ENCODE measurements at regions of chr6 and their contacts with region 1.

Region 1: GRCh38 chr6:46090115-46091079 is 39.4 kb upstream of the ENPP4 start:
- DNase-seq: peak; percentile 63
- H3K4me3 ChIP-seq: no peak overlapping the region
- H3K27ac ChIP-seq: no peak overlapping the region
- H3K4me1 ChIP-seq: no peaks in the 10 kb centered on the region
- CTCF ChIP-seq: peak; percentile 92

Region 2: GRCh38 chr6:45791211-45792168 is 298.9 kb before region 1 on chr6:
- CTCF ChIA-PET with region 1: no interaction called
- POLR2A ChIA-PET with region 1: no interaction called
- intact Hi-C with region 1: no loop called
- DNase-seq: no peak
- H3K4me3 ChIP-seq: no peak overlapping the region
- H3K27ac ChIP-seq: no peak overlapping the region
- H3K4me1 ChIP-seq: no peaks in the 10 kb centered on the region
- CTCF ChIP-seq: no peak

Region 3: DNA sequence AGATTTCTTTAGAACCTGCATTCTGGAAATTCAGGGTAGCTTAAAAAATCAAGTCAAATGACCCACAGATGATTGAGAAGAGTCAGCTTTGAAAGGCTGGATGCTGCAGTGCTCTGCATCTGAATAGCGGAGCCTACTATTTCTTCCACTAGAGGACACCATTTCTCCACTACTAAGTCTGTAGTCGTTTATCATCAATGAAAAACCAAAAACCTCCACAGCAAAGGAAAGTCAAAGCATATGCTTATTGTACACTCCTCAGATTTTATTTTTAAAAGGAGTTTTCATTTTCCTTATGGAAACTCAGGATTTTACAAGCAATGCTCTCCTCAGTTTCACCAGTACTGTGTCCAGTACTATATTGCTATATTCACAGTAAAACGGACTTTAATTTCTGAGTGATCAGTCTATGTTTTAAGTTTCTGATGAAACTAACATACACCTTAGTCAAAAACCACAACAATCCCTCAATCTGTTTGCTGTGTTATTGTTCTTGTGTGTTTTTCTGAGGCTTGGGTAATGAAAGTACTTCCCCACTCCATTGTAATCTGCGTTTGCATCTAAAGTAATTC is 130.9 kb after region 1 on chr6:
- CTCF ChIA-PET with region 1: interaction called, 3 read pairs
- POLR2A ChIA-PET with region 1: interaction called, 4 read pairs
- intact Hi-C with region 1: loop called (anchors 1 kb)
- DNase-seq: peak; percentile 79
- H3K4me3 ChIP-seq: no peak overlapping the region
- H3K27ac ChIP-seq: peak overlapping the region; percentile 36
- H3K4me1 ChIP-seq: peaks cover 17% of the 10 kb centered on the region
- CTCF ChIP-seq: peak; percentile 99

Region 4: GRCh38 chr6:46410334-46410953 is 320.0 kb after region 1 on chr6:
- CTCF ChIA-PET with region 1: no interaction called
- POLR2A ChIA-PET with region 1: no interaction called
- intact Hi-C with region 1: loop called (anchors 1 kb)
- DNase-seq: peak; percentile 63
- H3K4me3 ChIP-seq: no peak overlapping the region
- H3K27ac ChIP-seq: no peak overlapping the region
- H3K4me1 ChIP-seq: no peaks in the 10 kb centered on the region
- CTCF ChIP-seq: peak; percentile 90

Region 5: DNA sequence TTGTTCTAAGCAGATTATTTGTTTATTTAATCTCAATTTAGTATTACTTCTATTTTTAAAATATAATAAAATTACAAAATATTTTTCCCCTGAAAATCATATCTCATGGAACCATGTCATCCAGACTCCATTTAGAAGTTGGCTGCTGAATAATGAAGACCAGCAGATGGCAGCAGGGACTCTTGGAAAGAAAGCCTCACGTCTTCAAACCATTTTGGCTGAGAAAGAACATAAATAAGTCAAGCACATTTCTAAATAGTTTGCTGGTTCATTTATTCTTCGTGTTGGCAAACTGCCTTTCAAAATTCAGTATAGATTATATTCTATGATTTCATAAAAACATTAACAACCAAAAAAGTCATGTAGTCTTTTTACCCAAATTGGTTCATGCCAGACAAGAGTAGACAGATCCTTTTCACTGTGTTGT is 329.2 kb after region 1 on chr6:
- CTCF ChIA-PET with region 1: no interaction called
- POLR2A ChIA-PET with region 1: no interaction called
- intact Hi-C with region 1: loop called (anchors 2 kb)
- DNase-seq: peak; percentile 77
- H3K4me3 ChIP-seq: no peak overlapping the region
- H3K27ac ChIP-seq: no peak overlapping the region
- H3K4me1 ChIP-seq: no peaks in the 10 kb centered on the region
- CTCF ChIP-seq: peak; percentile 92

Region 6: DNA sequence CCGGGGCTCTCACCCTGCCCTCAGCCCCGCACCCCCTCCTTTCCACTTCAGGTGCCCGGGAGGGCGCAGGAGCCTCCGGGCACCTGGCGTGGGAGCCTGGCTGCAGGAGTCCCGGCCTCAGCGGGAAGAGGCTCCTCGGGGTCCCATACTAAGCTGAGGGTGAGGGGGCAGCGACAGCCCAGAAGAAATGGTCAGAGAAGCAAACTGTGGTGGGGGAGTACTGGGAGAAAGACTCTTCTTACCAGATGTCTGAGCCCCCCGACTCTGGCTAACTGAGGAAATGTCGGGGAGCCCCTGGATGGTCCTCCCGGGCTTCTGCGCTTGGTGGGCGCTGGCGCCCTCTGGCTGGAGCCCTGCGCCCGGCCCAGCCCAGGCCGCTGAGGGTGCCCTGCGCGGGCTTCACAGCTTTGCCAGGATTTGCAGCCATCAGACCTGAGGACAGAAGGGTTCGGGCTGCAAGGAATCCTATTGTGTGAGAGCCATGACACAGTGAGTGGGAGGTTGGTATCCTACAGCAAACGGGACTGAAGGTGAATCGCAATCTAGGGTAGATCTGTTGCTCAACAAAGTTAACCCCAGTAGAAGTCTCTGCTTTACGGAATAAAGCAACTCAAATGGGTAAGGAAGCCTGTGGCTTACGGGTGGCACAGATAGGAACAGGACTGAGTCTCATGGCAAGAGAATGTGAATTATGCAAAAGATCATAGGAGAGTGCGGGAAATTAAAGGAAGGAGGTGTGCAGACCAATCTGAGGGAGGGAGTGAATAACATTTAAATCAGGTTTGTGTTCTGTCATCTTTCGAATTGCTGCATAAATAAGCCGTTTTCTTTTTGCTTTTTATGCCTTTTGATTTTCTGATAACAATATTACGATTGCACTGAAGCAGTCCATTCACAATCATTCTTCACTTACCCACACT is 401.5 kb after region 1 on chr6:
- CTCF ChIA-PET with region 1: no interaction called
- POLR2A ChIA-PET with region 1: no interaction called
- intact Hi-C with region 1: loop called (anchors 10 kb)
- DNase-seq: peak; percentile 39
- H3K4me3 ChIP-seq: peak overlapping the region; percentile 72
- H3K27ac ChIP-seq: no peak overlapping the region
- H3K4me1 ChIP-seq: peaks cover 6% of the 10 kb centered on the region
- CTCF ChIP-seq: peak; percentile 79

Region 7: DNA sequence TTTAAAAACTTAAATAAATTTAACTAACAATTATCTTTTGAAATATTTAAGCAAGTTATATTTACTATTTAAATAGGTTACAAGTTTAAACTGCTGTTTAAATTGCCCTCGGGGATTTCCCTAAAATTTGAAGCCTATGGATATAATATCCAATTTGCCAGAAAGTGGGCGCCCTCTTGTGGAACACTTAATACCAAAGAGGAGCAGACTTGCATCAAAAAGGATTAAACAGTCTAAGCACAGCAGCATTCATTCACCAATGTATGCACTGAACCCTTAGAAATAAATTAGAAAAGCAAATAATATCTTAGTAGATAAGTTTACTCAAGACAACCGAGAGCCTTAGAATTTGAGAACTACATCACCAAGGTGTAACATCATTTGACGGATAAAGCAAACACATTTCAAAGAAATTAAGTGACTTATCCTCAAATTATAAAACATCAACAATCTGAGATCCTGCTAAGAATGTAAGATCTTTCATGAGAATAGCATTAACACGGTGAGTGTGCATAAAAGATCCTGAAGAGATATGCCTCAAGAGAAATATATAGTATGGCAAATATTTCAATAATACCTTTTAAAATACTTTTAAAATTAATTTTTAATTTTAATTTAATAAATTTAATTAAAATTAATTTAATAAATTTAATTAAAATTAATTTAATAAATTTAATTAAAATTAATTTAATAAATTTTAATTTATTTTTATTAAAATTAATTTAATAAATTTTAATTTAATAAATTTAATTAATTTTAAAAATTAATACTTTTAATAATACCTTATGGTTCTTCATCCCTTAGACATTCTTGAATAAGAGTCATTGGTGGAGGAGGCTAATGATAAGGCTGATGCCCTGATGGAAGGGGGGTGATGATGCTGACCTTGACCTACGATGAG is 691.3 kb after region 1 on chr6:
- CTCF ChIA-PET with region 1: no interaction called
- POLR2A ChIA-PET with region 1: no interaction called
- intact Hi-C with region 1: loop called (anchors 10 kb)
- DNase-seq: peak; percentile 72
- H3K4me3 ChIP-seq: no peak overlapping the region
- H3K27ac ChIP-seq: no peak overlapping the region
- H3K4me1 ChIP-seq: no peaks in the 10 kb centered on the region
- CTCF ChIP-seq: peak; percentile 98

Measured in OCI-LY7 (cell line).